Activated naive CD4-positive, alpha-beta T cell treated with anti-CD3 and anti-CD28 coated beads for 36 hours (primary cell): ENCODE measurements at regions of chr17 and their contacts with region 1.

Region 1: GRCh38 chr17:14118951-14119350 is 49.6 kb downstream of the COX10 start:
- DNase-seq: peak; percentile 37
- H3K4me3 Mint-ChIP-seq: no peak overlapping the region
- H3K27ac Mint-ChIP-seq: peak overlapping the region; percentile 96
- H3K4me1 Mint-ChIP-seq: peaks cover 88% of the 10 kb centered on the region
- H3K27me3 Mint-ChIP-seq: no peaks in the 10 kb centered on the region

Region 2: DNA sequence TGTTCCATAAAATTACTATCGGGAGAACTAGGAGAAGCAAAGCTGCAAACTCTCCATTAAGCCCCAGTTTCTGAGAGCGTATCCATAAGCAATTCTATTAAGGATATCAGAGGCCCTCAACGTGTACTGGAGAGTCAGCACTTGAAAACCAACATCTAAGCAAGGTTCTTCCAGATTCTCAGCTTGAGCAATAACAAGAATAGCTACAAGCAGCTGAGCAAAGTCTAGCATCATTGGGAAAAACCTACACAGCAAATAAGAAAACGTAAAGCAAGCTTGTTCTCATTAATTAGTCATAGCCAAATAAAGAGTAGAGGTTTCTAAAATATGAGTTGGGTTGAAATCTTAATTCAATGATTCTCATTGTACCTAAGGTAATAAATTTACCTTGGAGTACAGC is 76.5 kb before region 1 on chr17:
- CTCF ChIA-PET with region 1: no interaction called
- intact Hi-C with region 1: loop called (anchors 2 kb)
- DNase-seq: no peak
- H3K4me3 Mint-ChIP-seq: no peak overlapping the region
- H3K27ac Mint-ChIP-seq: no peak overlapping the region
- H3K4me1 Mint-ChIP-seq: peaks cover 35% of the 10 kb centered on the region
- H3K27me3 Mint-ChIP-seq: no peaks in the 10 kb centered on the region

Region 3: GRCh38 chr17:14107889-14108288 is 11.1 kb before region 1 on chr17:
- CTCF ChIA-PET with region 1: no interaction called
- intact Hi-C with region 1: loop called (anchors 1 kb)
- DNase-seq: no peak
- H3K4me3 Mint-ChIP-seq: no peak overlapping the region
- H3K27ac Mint-ChIP-seq: no peak overlapping the region
- H3K4me1 Mint-ChIP-seq: peaks cover 48% of the 10 kb centered on the region
- H3K27me3 Mint-ChIP-seq: no peaks in the 10 kb centered on the region

Region 4: GRCh38 chr17:14196377-14196997 is 77.5 kb after region 1 on chr17:
- CTCF ChIA-PET with region 1: no interaction called
- intact Hi-C with region 1: loop called (anchors 1 kb)
- DNase-seq: peak; percentile 40
- H3K4me3 Mint-ChIP-seq: peak overlapping the region; percentile 35
- H3K27ac Mint-ChIP-seq: peak overlapping the region; percentile 91
- H3K4me1 Mint-ChIP-seq: peaks cover 84% of the 10 kb centered on the region
- H3K27me3 Mint-ChIP-seq: no peaks in the 10 kb centered on the region

Region 5: GRCh38 chr17:14409292-14409691 is 290.3 kb after region 1 on chr17:
- CTCF ChIA-PET with region 1: no interaction called
- intact Hi-C with region 1: loop called (anchors 1 kb)
- DNase-seq: no peak
- H3K4me3 Mint-ChIP-seq: no peak overlapping the region
- H3K27ac Mint-ChIP-seq: no peak overlapping the region
- H3K4me1 Mint-ChIP-seq: peaks cover 12% of the 10 kb centered on the region
- H3K27me3 Mint-ChIP-seq: no peaks in the 10 kb centered on the region